Sciatic nerve (tissue), 2 donors: ENCODE measurements at regions of chr14 and their contacts with region 1.

Region 1: DNA sequence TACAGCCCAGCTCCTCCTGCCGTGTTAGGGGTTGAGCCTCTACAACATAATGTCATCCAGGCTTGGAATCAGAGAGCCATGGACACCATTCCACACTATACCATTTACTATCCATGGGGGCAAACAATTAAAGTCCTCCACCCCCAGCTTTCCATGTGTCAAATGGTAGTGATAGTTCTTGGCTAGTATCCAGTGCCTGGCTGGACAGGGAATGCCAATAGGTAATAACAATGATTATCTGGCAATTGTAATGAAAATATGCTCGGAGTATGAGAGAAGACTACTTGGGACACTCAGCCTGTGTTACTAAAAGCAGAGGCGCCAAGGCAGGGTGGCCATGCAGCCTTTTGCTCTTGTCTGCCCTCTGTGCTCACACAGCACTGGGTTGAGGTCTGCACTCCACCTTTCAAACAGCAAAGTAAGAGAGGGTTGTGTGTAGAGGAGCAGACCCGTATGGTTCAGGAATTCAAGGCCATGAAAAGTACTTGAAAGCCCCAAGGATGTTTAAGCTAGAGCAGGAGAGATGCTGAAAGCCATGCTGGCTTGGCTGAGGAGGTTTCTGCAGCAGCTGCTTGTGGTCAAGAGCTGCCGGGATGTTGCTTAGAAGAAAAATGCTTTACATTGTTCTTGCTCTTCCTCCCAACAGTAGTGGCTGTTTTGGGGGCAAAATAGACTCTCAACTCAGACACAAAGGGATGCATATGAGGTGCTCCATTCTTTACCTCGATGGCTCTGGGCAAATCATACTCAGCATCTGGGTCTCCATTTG is 10.6 kb downstream of the SERPINA3 start:
- DNase-seq: peak; percentile 15
- ATAC-seq: no peak

Region 2: GRCh38 chr14:93926873-93927799 is 695.7 kb before region 1 on chr14 and contains the start of gene FAM181A:
- intact Hi-C with region 1: no loop called
- DNase-seq: no peak
- ATAC-seq: no peak
- total RNA-seq, gene FAM181A: not detected

Region 3: DNA sequence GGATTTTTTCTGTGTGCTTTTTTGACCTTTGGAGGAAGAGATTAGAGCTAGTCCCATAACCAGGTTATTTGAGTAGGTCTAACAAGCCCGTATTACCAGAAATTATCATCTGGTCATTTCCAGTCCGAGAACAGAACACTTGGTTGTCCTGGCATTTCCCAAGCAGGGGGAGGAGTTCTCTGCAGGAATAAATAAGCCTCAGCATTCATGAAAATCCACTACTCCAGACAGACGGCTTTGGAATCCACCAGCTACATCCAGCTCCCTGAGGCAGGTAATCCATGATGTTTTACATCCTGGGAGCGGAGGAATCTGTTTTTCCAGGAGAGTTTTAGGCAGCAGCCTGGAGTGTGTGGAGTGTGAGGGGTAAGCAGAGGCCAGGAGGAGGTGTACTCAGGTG is 10.7 kb before region 1 on chr14 and contains the start of gene SERPINA3:
- intact Hi-C with region 1: loop called (anchors 1 kb)
- DNase-seq: peak; percentile 51
- ATAC-seq: peak; percentile 87
- total RNA-seq, gene SERPINA3: 77.1 TPM

Region 4: GRCh38 chr14:94833633-94834032 is 210.8 kb after region 1 on chr14:
- intact Hi-C with region 1: no loop called
- DNase-seq: no peak
- ATAC-seq: no peak